Esophagus squamous epithelium (tissue), 5 donors: ENCODE measurements at regions of chr17 and their contacts with region 1.

Region 1: DNA sequence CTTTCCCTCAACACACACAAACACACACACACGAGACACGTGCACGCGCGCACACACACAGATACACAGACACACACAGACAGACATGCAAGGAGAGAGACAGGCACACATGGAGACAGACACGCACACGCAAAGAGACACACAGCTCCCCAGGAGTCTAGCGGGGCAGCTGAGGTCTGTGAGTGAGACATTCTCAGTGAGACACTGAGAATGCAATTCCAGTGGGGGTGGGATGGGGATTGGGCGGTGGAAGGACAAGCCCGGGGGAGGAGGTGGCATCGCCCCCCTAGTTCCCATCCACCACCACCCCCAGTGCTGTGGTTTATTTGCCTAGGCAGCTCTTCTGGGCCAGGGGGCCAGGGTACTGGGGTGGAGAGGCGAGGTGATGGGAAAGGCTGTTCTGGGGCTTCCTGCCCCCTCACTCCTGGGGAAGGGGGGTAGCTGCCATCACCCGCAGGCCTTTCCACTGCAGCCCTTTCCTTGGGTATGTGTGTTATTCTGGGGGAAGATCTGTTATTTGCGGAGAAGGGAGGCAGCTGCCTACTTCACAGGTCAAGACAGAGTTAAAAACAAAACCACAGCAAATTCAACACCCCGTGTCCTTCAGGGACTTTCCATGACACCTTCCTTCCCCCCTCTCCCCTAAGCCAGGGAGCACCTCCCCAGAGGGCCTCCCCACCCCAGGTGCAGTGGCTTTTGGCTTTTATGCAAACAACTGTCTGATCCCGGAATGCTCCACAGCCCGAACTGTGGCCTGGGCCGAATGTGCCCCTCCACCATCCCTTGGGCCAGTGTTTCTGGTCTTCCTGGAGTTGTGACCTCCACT is 18.0 kb downstream of the GRB7 start:
- DNase-seq: no peak
- H3K4me3 ChIP-seq: no peak overlapping the region
- H3K27ac ChIP-seq: peak overlapping the region; percentile 83 to 95 (median 92)
- H3K4me1 ChIP-seq: peaks cover 15 to 31% (median 18%) of the 10 kb centered on the region in 3 donors
- H3K27me3 ChIP-seq: peaks cover 0 to 8% (median 0%) of the 10 kb centered on the region in 4 donors
- CTCF ChIP-seq: no peak
- POLR2A ChIP-seq: no peak

Region 2: DNA sequence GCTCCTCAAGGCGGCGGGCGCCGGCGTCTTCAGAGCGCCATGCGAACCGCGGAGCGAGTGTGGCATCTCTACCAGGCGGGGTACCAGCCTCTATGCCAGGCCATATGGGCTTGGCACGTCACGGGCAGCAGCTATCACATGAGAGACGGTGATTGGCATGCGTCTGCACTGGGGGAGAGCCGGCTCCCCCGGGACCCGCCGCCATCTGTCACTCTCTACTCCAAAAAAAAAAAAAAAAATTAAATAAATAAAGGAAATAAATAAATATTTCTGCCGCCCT is 148.0 kb before region 1 on chr17 and contains the start of gene NEUROD2:
- intact Hi-C with region 1: no loop called
- DNase-seq: no peak
- H3K4me3 ChIP-seq: peak within 1 kb of the TSS in 2 of 4 donors; percentile 24 to 52
- H3K27ac ChIP-seq: no peak within 1 kb of the TSS
- H3K4me1 ChIP-seq: peaks cover 28 to 55% (median 34%) of the 10 kb centered on the region in 3 donors
- H3K27me3 ChIP-seq: peaks cover 38 to 100% (median 52%) of the 10 kb centered on the region in 4 donors
- CTCF ChIP-seq: no peak
- POLR2A ChIP-seq: no peak
- total RNA-seq, gene NEUROD2: not detected

Region 3: GRCh38 chr17:39621523-39622379 is 134.0 kb before region 1 on chr17:
- intact Hi-C with region 1: loop called (anchors 5 kb)
- DNase-seq: peak; percentile 55
- H3K4me3 ChIP-seq: peak overlapping the region in 1 of 4 donors; percentile 19
- H3K27ac ChIP-seq: peak overlapping the region in 2 of 4 donors; percentile 11 to 43
- H3K4me1 ChIP-seq: peaks cover 37 to 67% (median 46%) of the 10 kb centered on the region in 3 donors
- H3K27me3 ChIP-seq: peaks cover 0 to 59% (median 2%) of the 10 kb centered on the region in 4 donors
- CTCF ChIP-seq: peak; percentile 99 to 100 (median 100)
- POLR2A ChIP-seq: no peak

Region 4: DNA sequence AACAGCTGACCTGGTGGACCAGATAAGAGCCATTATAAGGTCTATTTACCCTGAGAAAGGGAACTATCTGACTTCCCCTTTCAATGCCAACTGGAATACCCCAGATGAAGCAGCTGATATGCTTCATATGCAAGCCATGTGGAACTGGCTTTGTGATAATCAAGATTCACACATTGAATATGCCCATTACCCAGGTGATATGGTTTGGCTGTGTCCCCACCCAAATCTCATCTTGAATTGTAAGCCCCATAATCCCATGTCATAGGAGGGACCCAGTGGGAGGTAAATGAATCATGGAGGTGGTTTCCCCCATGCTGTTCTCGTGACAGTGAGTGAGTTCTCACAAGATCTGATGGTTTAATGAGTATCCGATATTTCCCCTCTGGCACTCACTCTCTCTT is 66.3 kb after region 1 on chr17:
- intact Hi-C with region 1: no loop called
- DNase-seq: no peak
- H3K4me3 ChIP-seq: no peak overlapping the region
- H3K27ac ChIP-seq: no peak overlapping the region
- H3K4me1 ChIP-seq: no peaks in the 10 kb centered on the region
- H3K27me3 ChIP-seq: peaks cover 0 to 7% (median 0%) of the 10 kb centered on the region in 4 donors
- CTCF ChIP-seq: no peak
- POLR2A ChIP-seq: no peak